ENCODE measurements at regions of chr22 and their contacts with region 1.

Region 1: GRCh38 chr22:33000342-33001280 is 57.6 kb downstream of the SYN3 start:
- DNase-seq: peak in 1 of 2 experiments; percentile 60
- H3K4me3 ChIP-seq: no peak overlapping the region
- H3K27ac ChIP-seq: no peak overlapping the region
- H3K4me1 ChIP-seq: peaks cover 27% of the 10 kb centered on the region
- H3K27me3 ChIP-seq: no peaks in the 10 kb centered on the region
- CTCF ChIP-seq: peak; percentile 97

Region 2: DNA sequence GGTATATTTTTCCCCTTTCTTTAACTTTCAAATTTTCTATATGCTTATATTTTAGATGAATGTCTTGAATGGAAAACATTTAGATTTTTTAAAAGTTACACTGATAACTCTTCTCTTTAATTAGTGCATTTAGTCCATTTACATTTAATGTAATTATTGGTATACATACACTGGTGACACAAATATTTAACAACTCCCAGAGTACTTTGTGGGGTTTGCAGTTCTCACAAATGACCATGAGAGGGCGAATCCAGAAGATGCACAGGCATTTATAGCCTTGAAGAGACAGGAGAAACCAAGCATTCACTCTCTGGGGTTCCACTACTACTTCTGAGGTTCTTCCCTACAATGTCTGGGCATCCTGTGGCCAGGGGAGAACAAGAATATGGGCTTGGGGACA is 74.0 kb before region 1 on chr22:
- CTCF ChIA-PET with region 1: interaction called, 3 read pairs
- POLR2A ChIA-PET with region 1: no interaction called
- intact Hi-C with region 1: loop called (anchors 5 kb)
- DNase-seq: peak in 1 of 2 experiments; percentile 48
- H3K4me3 ChIP-seq: no peak overlapping the region
- H3K27ac ChIP-seq: no peak overlapping the region
- H3K4me1 ChIP-seq: no peaks in the 10 kb centered on the region
- H3K27me3 ChIP-seq: peaks cover 16% of the 10 kb centered on the region; the same call in 1 of the 2 replicates
- CTCF ChIP-seq: peak; percentile 77

Region 3: DNA sequence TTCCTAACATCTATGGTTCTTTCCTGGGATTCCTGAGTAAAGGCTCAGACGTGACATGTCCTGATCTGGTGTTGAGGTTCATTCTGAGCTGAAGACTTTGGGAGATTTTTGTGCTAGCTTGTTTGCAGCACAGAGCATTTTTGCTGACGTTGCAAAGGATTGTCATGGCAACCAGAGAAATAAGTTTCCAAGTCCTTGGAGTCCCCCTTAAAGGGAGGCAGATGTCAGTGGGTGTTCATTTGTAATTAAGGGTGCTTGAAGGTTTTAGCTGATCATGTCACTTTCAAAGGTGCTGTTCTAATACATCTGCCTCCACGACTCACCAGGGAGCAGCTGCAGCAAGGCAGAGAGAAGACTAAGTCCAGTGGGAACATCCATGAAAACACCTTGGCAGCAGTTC is 63.0 kb after region 1 on chr22:
- CTCF ChIA-PET with region 1: no interaction called
- POLR2A ChIA-PET with region 1: no interaction called
- intact Hi-C with region 1: no loop called
- DNase-seq: no peak
- H3K4me3 ChIP-seq: no peak overlapping the region
- H3K27ac ChIP-seq: no peak overlapping the region
- H3K4me1 ChIP-seq: no peaks in the 10 kb centered on the region
- H3K27me3 ChIP-seq: peaks cover 95% of the 10 kb centered on the region
- CTCF ChIP-seq: no peak